Panc1 (cell line): ENCODE measurements at regions of chr1 and their contacts with region 1.

Region 1: DNA sequence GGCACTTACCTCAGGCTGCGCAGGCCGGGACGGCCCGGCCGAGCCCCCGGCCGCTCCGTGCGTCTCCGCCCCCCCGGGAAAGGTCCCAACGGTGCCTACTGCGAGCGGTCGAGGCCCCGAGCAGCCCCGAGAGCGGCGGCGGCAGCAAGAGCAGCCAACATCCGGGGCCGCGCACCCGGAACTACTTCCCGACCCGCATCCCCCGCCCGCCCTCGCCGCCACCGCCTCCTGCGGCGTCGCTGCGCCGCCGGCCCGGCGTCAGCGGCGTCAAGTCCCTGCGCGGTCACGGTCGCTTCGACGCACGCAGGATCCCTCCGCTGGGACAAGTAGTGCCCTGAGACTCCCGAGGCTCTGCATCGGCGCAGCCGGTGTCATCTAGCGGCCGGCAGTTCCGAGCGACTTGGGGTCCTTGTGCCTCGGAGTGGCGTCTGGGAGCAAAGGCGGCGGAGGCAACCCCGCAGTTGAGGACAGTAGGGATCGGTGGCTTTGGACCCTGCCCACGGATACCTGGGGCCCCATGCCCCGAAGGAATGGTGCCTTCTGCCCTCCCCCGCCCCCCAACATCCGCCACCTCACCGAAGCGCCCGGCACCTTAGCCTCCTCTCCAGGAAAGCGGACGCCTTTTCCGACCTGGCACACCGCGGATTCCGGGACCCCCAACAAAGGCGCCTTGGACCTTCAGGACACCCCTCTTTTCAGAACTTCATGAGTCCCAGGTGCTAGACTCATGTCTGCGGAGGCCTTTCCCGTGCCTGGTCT is at the start of gene FOXJ3:
- DNase-seq: peak; percentile 82
- ATAC-seq: peak; percentile 91
- H3K4me3 ChIP-seq: peak within 1 kb of the TSS; percentile 85 to 98
- H3K27ac ChIP-seq: peak within 1 kb of the TSS; percentile 98
- H3K4me1 ChIP-seq: peaks cover 41% of the 10 kb centered on the region
- H3K27me3 ChIP-seq: no peaks in the 10 kb centered on the region
- CTCF ChIP-seq: no peak
- total RNA-seq, gene FOXJ3: 55.3 TPM

Region 2: DNA sequence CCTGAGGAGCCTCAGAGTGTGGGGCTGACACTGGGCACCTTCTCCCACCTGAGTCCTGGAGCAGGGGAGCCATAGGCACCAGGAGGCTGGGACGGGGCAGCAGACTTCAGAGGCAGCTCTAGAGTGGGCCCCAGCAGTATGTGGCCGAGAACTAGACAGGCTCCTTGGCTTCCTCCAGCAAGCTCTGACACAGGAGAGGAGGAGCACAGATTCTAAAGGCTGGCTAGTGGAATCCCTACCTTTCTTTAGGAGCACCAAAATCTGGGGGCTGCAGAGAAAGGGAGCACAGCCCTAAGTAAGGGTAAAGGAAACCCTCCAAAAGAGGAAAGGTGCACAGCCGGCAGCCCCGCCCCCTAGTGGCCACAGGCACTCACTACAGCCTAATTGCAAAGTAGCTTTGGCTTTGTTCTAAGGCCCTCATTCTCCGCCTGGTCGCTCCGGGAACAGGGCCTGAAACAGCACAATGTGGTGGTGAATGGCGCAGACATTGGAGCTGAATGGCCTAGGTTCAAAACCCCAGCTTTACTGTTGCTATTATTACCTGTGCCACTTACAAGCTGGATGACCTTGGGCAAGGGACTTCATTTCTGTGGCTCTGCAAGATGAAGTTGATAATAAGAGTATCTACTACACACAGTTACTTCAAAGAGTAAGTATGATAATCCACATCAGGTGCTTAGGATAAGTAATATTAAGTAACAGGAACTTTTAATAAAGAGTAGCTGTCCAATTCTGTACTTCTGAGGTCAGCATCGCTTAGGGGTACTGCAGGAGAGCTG is 161.9 kb before region 1 on chr1:
- CTCF ChIA-PET with region 1: interaction called, 4 read pairs
- POLR2A ChIA-PET with region 1: no interaction called
- in situ Hi-C with region 1: no loop called
- intact Hi-C with region 1: loop called (anchors 5 kb)
- DNase-seq: peak; percentile 43
- ATAC-seq: peak; percentile 66
- H3K4me3 ChIP-seq: no peak overlapping the region
- H3K27ac ChIP-seq: no peak overlapping the region
- H3K4me1 ChIP-seq: no peaks in the 10 kb centered on the region; the same call in 1 of the 2 replicates
- H3K27me3 ChIP-seq: no peaks in the 10 kb centered on the region
- CTCF ChIP-seq: peak; percentile 99

Region 3: GRCh38 chr1:42319128-42319851 is 15.9 kb before region 1 on chr1:
- CTCF ChIA-PET with region 1: interaction called, 14 read pairs
- POLR2A ChIA-PET with region 1: interaction called, 3 read pairs
- in situ Hi-C with region 1: no loop called
- intact Hi-C with region 1: no loop called
- DNase-seq: no peak
- ATAC-seq: no peak
- H3K4me3 ChIP-seq: no peak overlapping the region
- H3K27ac ChIP-seq: no peak overlapping the region
- H3K4me1 ChIP-seq: peaks cover 33% of the 10 kb centered on the region
- H3K27me3 ChIP-seq: no peaks in the 10 kb centered on the region
- CTCF ChIP-seq: no peak

Region 4: DNA sequence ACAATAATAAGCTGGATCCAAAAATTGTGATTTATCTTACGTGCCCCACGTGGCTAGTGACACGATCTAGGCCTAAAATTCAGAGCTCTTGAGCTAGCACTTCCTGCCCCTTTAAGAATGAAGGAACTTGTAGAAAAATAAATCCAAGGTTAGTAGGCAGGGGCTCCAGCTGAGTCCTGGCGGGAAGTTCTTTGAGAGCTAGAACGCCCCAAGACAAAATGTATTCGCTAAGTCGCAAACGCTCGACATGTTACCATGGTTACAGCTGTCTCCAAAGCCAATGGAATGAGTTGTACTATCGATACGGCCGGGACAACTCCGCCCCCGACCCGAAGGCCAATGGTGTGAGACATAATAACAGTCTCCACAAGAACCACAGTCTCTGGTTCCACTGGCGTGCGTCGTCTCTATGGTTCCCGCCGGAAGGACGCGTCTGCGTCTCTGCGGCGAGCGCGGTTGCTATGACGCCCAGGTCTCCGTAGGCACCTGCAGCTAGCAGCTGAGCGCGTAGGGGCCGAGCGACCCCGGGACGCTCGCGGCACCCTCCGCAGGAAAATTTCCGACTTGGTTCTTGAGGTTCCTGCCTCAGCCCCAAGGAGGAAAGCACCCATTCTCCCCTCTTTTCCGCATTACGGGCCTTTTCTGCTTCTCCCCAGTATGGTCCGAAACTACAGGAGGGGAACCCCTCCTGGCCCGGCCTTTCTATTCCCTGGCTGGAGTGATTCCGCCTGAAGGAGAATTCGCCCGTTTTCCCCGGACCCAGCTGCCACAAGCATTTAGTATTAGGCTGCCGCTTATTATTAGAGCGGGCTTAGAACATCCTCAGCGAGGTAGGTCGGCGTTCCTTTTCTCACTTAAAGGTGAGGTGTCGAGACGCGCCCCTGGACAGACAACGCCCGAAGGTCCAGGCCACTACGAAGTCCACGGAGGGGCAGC is 127.9 kb after region 1 on chr1 and contains the start of gene CCDC30:
- CTCF ChIA-PET with region 1: no interaction called
- POLR2A ChIA-PET with region 1: no interaction called
- in situ Hi-C with region 1: no loop called
- intact Hi-C with region 1: loop called (anchors 5 kb)
- DNase-seq: peak; percentile 97
- ATAC-seq: peak; percentile 100
- H3K4me3 ChIP-seq: peak within 1 kb of the TSS; percentile 78 to 93
- H3K27ac ChIP-seq: peak within 1 kb of the TSS; percentile 80
- H3K4me1 ChIP-seq: peaks cover 18% of the 10 kb centered on the region
- H3K27me3 ChIP-seq: no peaks in the 10 kb centered on the region
- CTCF ChIP-seq: no peak
- total RNA-seq, gene CCDC30: 1.3 TPM